ENCODE measurements at regions of chr15 and their contacts with region 1.

Region 1: GRCh38 chr15:86178845-86179244 is 99.2 kb downstream of the AGBL1 start:
- DNase-seq: no peak
- ATAC-seq: no peak
- H3K4me3 ChIP-seq: no peak overlapping the region
- H3K27ac ChIP-seq: no peak overlapping the region
- H3K4me1 ChIP-seq: no peaks in the 10 kb centered on the region
- H3K27me3 ChIP-seq: no peaks in the 10 kb centered on the region

Region 2: GRCh38 chr15:85865070-85865684 is 313.7 kb before region 1 on chr15:
- intact Hi-C with region 1: loop called in 1 of 4 experiments (anchors 10 kb)
- DNase-seq: peak in 1 of 3 donors; percentile 67
- ATAC-seq: peak; percentile 48 to 54
- H3K4me3 ChIP-seq: no peak overlapping the region
- H3K27ac ChIP-seq: no peak overlapping the region
- H3K4me1 ChIP-seq: no peaks in the 10 kb centered on the region
- H3K27me3 ChIP-seq: no peaks in the 10 kb centered on the region

Region 3: GRCh38 chr15:86229936-86230335 is 51.1 kb after region 1 on chr15:
- intact Hi-C with region 1: no loop called
- DNase-seq: no peak
- ATAC-seq: no peak
- H3K4me3 ChIP-seq: no peak overlapping the region
- H3K27ac ChIP-seq: no peak overlapping the region
- H3K4me1 ChIP-seq: no peaks in the 10 kb centered on the region
- H3K27me3 ChIP-seq: no peaks in the 10 kb centered on the region

Measured in right cardiac atrium (tissue), 5 donors.